Activated naive CD4-positive, alpha-beta T cell treated with anti-CD3 and anti-CD28 coated beads for 36 hours (primary cell): ENCODE measurements at regions of chr12 and their contacts with region 1.

Region 1: DNA sequence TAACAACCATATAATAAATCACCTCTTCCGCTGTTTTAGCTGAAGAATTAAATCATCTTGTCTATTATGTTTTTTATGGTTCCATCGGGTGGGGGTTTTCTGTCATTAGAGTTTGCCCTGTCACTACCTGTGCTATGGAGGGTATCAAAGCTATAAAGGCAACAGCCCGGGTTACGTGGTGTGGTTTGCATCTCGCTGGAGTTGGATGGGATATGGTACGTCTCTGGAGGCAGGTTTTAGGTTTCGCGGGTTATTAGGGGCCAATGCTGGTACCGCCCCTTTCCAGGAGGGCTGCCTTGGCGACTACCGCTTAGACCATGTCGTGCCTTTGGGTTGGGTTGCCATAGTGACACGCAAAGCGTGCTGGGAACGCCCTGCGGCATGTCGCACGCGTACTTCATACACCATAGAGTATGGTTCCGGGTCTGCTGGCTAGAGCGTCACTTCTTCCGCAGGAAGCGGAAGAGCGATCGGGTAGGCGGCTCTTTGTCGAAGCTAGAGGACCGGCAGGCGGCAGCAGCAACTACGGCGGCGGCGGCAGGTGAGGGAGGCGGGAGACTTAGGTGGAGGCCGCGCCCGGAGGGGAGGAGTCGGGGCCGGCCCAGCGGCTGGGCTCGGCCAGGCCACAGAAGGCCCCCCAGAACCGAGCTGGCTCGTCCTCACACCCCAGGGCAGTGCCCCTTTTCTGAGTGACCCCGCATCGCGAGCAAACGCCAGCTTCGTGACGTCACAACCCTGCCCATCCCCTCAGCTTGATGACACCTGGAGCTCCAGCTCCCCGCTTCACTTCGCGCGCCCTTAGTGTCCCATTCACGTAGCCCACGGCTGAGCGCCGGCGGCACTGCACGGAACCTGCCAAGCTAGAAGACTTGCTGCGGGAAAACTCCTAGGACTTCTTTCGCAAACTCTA is at the start of gene ZC3H10:
- DNase-seq: peak; percentile 99
- H3K4me3 Mint-ChIP-seq: peak within 1 kb of the TSS; percentile 97
- H3K27ac Mint-ChIP-seq: peak within 1 kb of the TSS; percentile 99
- H3K4me1 Mint-ChIP-seq: peaks cover 23% of the 10 kb centered on the region
- H3K27me3 Mint-ChIP-seq: no peaks in the 10 kb centered on the region
- total RNA-seq, gene ZC3H10: 6.4 to 6.6 TPM

Region 2: GRCh38 chr12:55817346-55818139 is 300.5 kb before region 1 on chr12 and contains the starts of genes ORMDL2 and SARNP:
- CTCF ChIA-PET with region 1: no interaction called
- intact Hi-C with region 1: loop called (anchors 1 kb)
- DNase-seq: peak; percentile 99
- H3K4me3 Mint-ChIP-seq: no peak within 1 kb of the TSS
- H3K27ac Mint-ChIP-seq: no peak within 1 kb of the TSS
- H3K4me1 Mint-ChIP-seq: peaks cover 43% of the 10 kb centered on the region
- H3K27me3 Mint-ChIP-seq: no peaks in the 10 kb centered on the region
- total RNA-seq, gene ORMDL2: 23.8 to 26.4 TPM
- total RNA-seq, gene SARNP: 100 to 101 TPM

Region 3: DNA sequence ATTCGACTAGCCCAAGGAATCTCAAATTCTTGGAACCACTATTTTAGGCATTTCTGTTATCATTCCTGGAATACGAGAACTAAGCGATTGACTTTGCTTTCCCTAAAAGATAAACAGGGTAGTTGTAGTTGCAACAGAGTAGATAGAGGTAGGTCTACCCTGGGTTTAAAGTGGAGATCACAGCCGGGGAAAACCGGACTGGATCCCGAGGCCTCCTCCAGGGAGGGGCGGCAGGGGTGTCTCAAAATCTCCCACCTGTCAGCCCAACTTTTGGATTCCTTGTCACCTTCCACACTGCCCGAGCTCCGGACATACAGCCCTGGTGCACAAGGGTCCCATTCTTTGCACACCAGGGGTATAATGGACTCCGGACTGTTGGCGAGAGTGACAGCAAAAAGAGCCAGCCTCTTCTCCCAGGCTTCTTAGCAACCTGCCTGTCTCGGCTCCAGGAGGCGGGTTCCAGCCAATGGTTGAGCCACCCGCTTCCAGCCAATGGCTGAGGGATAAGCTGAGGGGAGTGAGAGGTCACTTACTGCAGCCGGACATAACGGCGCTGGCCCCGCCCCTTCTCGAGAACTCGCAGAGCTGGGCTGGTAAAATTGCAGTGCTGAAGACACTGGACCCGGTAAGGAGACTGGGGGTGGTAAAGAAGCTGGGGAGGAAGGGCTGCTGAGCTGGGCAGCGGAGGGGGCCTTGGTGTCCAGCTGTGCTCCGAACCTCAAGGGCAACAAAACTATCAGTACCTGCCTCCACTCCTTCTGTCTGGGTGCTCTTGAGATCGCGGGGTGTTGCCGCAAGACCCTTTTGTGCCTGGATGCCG is 121.1 kb before region 1 on chr12 and contains the start of gene SUOX:
- CTCF ChIA-PET with region 1: interaction called, 3 read pairs
- intact Hi-C with region 1: loop called (anchors 2 kb)
- DNase-seq: peak; percentile 72
- H3K4me3 Mint-ChIP-seq: peak within 1 kb of the TSS; percentile 72
- H3K27ac Mint-ChIP-seq: peak within 1 kb of the TSS; percentile 36
- H3K4me1 Mint-ChIP-seq: peaks cover 20% of the 10 kb centered on the region
- H3K27me3 Mint-ChIP-seq: peaks cover 18% of the 10 kb centered on the region
- total RNA-seq, gene SUOX: 1.7 to 2.2 TPM

Region 4: DNA sequence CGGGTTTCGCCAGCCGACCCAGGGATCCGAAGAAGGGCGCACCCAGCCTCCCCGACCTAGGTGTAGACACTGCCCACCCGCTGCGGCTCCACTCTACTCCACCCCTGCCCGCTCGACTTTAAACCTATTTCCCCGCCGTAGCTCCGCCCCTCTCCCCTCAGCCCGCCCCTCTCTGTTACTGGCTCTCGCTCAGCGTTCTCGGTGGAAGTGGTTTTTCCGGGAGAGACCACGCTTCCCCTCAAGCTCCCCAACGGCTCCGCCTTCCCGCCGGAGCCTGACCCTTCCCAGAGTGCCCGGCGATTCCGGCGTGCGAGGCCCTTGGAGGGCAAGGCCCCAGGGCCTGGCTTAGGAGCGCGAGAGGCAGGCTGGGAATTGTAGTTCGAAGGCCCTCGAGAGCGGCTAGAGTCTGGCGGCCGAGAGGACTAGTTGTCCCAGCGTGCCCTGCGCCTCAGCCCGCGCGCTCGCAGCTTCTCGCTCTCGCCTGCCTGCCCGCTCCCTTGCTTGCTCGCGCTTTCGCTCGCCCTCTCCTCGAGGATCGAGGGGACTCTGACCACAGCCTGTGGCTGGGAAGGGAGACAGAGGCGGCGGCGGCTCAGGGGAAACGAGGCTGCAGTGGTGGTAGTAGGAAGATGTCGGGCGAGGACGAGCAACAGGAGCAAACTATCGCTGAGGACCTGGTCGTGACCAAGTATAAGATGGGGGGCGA is 13.8 kb before region 1 on chr12 and contains the start of gene PA2G4:
- CTCF ChIA-PET with region 1: interaction called, 13 read pairs
- intact Hi-C with region 1: loop called (anchors 1 kb)
- DNase-seq: peak; percentile 99
- H3K4me3 Mint-ChIP-seq: peak within 1 kb of the TSS; percentile 99
- H3K27ac Mint-ChIP-seq: peak within 1 kb of the TSS; percentile 99
- H3K4me1 Mint-ChIP-seq: peaks cover 38% of the 10 kb centered on the region
- H3K27me3 Mint-ChIP-seq: no peaks in the 10 kb centered on the region
- total RNA-seq, gene PA2G4: 398 to 411 TPM

Region 5: GRCh38 chr12:56189176-56189917 is 71.3 kb after region 1 on chr12 and contains the start of gene SMARCC2:
- CTCF ChIA-PET with region 1: interaction called, 86 read pairs
- intact Hi-C with region 1: loop called (anchors 1 kb)
- DNase-seq: peak; percentile 93
- H3K4me3 Mint-ChIP-seq: peak within 1 kb of the TSS; percentile 95
- H3K27ac Mint-ChIP-seq: peak within 1 kb of the TSS; percentile 92
- H3K4me1 Mint-ChIP-seq: peaks cover 33% of the 10 kb centered on the region
- H3K27me3 Mint-ChIP-seq: no peaks in the 10 kb centered on the region
- total RNA-seq, gene SMARCC2: 75.8 to 79.0 TPM

Region 6: DNA sequence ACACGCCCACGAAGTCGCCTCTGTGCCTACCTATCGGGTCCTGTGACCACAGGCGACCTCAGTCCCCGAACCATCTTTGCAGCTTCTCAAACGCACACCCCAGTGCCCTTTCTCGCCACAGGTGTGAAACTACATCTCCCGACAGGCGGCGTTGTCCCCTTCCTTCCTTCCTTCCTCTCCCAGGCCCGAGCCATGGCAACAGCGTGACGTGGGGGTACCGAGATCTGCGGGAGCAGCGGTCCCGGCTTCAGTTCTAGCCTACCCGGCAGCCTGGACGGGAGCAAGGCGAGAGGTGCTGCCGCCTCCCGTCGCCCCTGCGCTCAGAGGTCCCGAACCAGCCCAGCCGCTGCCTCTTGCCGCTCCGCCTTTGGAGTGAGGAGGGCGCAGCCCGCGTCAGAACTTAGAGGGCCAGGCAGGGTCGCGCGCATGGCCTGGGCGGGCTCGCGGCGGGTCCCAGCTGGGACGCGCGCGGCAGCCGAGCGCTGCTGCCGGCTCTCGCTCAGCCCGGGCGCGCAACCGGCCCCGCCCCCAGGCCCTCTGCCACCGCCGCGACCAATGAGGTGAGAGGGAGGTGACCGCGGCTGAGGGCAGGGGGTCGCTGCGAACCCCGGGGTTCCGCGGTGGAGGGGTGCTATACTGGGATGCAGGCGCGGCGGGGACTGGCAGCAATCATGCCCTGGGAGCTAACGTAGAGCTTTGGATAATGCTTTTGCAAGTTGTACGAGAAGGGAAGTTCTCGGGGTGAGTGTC is 148.8 kb after region 1 on chr12 and contains the start of gene COQ10A:
- CTCF ChIA-PET with region 1: no interaction called
- intact Hi-C with region 1: no loop called
- DNase-seq: peak; percentile 90
- H3K4me3 Mint-ChIP-seq: peak within 1 kb of the TSS; percentile 89
- H3K27ac Mint-ChIP-seq: peak within 1 kb of the TSS; percentile 81
- H3K4me1 Mint-ChIP-seq: peaks cover 16% of the 10 kb centered on the region
- H3K27me3 Mint-ChIP-seq: no peaks in the 10 kb centered on the region
- total RNA-seq, gene COQ10A: 3.5 to 6.1 TPM

Region 7: GRCh38 chr12:56333679-56334489 is 215.9 kb after region 1 on chr12 and contains the start of gene PAN2:
- CTCF ChIA-PET with region 1: interaction called, 5 read pairs
- intact Hi-C with region 1: loop called (anchors 1 kb)
- DNase-seq: peak; percentile 98
- H3K4me3 Mint-ChIP-seq: peak within 1 kb of the TSS; percentile 97
- H3K27ac Mint-ChIP-seq: peak within 1 kb of the TSS; percentile 100
- H3K4me1 Mint-ChIP-seq: peaks cover 44% of the 10 kb centered on the region
- H3K27me3 Mint-ChIP-seq: no peaks in the 10 kb centered on the region
- total RNA-seq, gene PAN2: 82.7 to 85.4 TPM